GM12878 (cell line): ENCODE measurements at regions of chr17 and their contacts with region 1.

Region 1: GRCh38 chr17:64648234-64648633 is 13.9 kb downstream of the SMURF2 start:
- DNase-seq: no peak
- ATAC-seq: no peak
- H3K4me3 ChIP-seq: no peak overlapping the region
- H3K27ac ChIP-seq: no peak overlapping the region
- H3K4me1 ChIP-seq: peaks cover 7% of the 10 kb centered on the region
- H3K27me3 ChIP-seq: no peaks in the 10 kb centered on the region
- CTCF ChIP-seq: no peak
- EP300 ChIP-seq: no peak
- POLR2A ChIP-seq: no peak
- RAD21 ChIP-seq: no peak

Region 2: DNA sequence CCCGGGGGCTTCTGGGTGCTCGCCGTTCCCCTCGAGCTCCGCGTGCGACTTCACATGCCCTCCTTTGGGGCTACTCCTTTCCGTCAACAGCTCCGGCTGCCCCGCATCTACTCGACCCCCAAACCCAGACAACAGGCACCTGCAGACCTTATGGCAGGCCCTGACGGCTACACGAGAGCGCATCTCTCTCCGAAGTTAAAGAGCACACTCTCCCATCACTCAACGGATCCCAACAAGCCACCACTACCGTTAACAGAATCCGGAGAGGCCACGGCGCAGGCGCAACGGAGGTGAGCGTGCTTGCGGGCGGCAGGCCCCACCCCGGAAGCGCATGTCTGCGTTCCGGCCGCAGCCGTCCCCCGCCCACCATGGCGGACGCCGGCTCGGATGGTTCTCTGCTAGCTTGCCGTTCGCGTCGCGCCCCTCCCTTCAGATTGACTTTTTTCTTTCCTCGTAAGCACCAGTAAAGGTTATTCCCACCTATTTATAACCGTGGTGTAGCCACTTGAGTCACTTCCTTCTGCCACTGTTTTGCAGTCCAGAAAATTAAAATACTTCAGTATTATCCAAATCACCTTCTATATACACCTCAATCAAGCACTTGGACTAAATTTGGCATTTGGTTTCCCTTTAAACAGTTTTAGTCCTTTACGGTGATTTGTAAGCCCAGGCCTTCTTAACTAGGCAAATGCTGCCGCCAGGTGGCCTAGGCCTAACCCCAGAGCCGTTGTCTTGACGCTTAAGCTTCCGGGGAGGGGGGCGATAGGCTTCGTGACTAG is 151.3 kb before region 1 on chr17 and contains the start of gene POLG2:
- CTCF ChIA-PET with region 1: interaction called, 28 read pairs
- POLR2A ChIA-PET with region 1: interaction called, 7 read pairs
- RAD21 ChIA-PET with region 1: interaction called, 12 read pairs
- SMC1A ChIA-PET with region 1: interaction called, 7 read pairs
- in situ Hi-C with region 1: loop called (anchors 10 kb)
- intact Hi-C with region 1: no loop called
- DNase-seq: peak; percentile 75
- ATAC-seq: peak; percentile 88
- H3K4me3 ChIP-seq: peak within 1 kb of the TSS; percentile 88
- H3K27ac ChIP-seq: peak within 1 kb of the TSS; percentile 85
- H3K4me1 ChIP-seq: peaks cover 11% of the 10 kb centered on the region; the same call in 1 of the 2 replicates
- H3K27me3 ChIP-seq: no peaks in the 10 kb centered on the region
- CTCF ChIP-seq: peak; percentile 63 to 71 (median 66)
- EP300 ChIP-seq: no peak; a peak in 1 of 4 replicates
- POLR2A ChIP-seq: peak; percentile 95
- RAD21 ChIP-seq: peak; percentile 36; the same call in 1 of the 2 replicates
- polyA plus RNA-seq, gene POLG2: 10.2 to 13.5 TPM

Region 3: DNA sequence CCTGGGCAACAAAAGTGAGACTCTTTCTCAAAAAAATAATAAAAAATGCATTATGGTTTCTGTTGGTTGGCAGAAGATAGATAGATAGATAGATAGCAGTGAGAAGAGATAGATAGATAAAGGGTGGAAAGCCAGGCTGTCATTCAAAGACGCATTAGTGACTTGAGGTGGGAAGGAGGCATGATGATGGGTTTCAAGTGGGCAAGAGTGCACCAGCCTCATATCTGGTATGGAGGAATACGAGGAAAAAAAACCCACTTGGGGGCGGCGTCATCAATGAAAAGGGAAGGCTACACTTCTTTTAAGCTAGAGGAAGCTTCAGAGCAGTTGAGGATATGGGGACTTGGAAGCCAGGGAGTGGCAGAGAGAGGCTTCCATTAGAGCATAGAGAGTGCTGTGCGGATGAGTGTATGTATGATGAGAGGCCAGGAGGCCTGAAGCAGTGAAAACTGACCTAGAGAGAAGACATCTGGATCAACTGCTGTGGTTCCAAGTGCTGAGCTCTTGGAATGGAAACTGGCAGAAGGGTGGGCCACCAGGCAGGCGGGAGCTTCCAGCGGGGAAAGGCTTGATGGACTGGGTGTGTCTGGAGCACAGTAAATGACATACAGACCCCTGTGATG is 109.6 kb before region 1 on chr17:
- CTCF ChIA-PET with region 1: interaction called, 15 read pairs
- POLR2A ChIA-PET with region 1: no interaction called
- RAD21 ChIA-PET with region 1: no interaction called
- SMC1A ChIA-PET with region 1: interaction called, 7 read pairs
- in situ Hi-C with region 1: no loop called
- intact Hi-C with region 1: no loop called
- DNase-seq: no peak
- ATAC-seq: no peak
- H3K4me3 ChIP-seq: no peak overlapping the region
- H3K27ac ChIP-seq: no peak overlapping the region
- H3K4me1 ChIP-seq: no peaks in the 10 kb centered on the region
- H3K27me3 ChIP-seq: no peaks in the 10 kb centered on the region
- CTCF ChIP-seq: no peak
- EP300 ChIP-seq: no peak
- POLR2A ChIP-seq: peak; percentile 28; the same call in 1 of the 2 replicates
- RAD21 ChIP-seq: no peak

Region 4: DNA sequence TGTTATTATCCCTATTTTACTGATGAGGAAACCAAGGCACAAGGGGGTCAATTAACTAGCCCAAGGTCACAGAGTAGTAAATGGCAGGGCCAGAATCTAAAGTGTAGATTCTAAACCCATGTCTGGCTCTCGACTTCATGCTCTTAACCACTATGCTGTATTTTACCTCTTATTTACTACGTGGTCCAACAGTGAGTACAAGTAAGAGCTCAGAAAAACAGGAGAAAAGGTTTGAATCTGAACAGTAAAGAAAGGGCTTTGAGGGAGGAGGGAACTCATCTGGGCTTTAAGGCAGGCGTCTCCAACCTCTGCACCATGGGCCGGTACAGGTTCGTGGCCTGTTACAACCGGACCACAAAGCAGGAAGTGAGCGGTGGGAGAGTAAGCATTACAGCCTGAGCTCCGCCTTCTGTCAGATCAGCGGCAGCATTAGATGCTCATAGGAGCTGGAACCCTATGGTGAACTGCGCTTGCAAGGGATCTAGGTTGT is 49.0 kb before region 1 on chr17:
- CTCF ChIA-PET with region 1: interaction called, 23 read pairs
- POLR2A ChIA-PET with region 1: interaction called, 5 read pairs
- RAD21 ChIA-PET with region 1: interaction called, 8 read pairs
- SMC1A ChIA-PET with region 1: interaction called, 15 read pairs
- in situ Hi-C with region 1: no loop called
- intact Hi-C with region 1: no loop called
- DNase-seq: no peak
- ATAC-seq: peak; percentile 98
- H3K4me3 ChIP-seq: peak overlapping the region; percentile 37; the same call in 1 of the 2 replicates
- H3K27ac ChIP-seq: peak overlapping the region; percentile 76
- H3K4me1 ChIP-seq: peaks cover 4% of the 10 kb centered on the region; the same call in 1 of the 2 replicates
- H3K27me3 ChIP-seq: no peaks in the 10 kb centered on the region
- CTCF ChIP-seq: no peak
- EP300 ChIP-seq: no peak
- POLR2A ChIP-seq: peak; percentile 66
- RAD21 ChIP-seq: no peak